GM10248 (cell line): ENCODE measurements at regions of chr11 and their contacts with region 1.

Region 1: GRCh38 chr11:9015677-9016076 is 11.9 kb upstream of the NRIP3 start:
- DNase-seq: peak; percentile 80
- CTCF ChIP-seq: peak; percentile 79

Region 2: DNA sequence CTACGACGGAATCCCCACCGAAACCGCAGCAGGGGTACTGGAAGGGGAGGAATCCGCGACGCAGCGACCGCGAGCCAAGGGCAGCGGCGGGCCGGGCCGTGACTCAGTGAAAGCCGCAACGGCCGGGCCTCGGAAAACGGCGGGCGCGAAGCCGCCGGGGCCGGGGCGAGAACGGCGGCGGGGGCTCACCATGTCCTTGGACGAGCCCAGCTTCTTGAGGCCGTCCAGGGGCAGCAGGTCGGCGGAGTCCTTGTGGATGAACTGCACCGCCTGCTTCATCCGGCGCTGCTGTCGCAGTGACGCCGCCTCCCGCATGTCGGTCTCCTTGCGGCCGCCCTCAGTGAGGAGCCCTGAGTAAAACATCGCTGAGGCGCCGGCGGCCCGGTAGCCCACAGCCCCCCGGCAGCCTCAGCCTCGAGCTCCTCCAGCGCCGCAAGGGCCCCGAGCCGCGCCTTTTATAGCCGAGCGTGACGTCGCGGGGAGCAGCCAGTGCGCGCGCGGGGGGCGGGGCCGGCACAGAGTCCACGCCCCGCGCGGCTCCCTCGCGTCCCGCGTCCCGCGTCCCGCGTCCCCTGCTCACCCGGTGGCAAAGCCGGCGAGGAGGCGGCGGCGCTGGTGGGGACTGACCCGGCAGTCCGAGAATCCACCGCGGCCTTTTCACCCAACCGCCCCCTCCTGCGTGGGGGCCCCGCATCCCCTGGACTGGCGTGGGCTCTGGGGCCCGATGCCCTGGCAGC is 11.9 kb before region 1 on chr11 and contains the start of gene NRIP3:
- CTCF ChIA-PET with region 1: interaction called, 62 read pairs
- POLR2A ChIA-PET with region 1: no interaction called
- DNase-seq: peak; percentile 77
- CTCF ChIP-seq: no peak

Region 3: GRCh38 chr11:9039194-9039593 is 23.5 kb after region 1 on chr11:
- CTCF ChIA-PET with region 1: interaction called, 137 read pairs
- POLR2A ChIA-PET with region 1: no interaction called
- DNase-seq: peak; percentile 39
- CTCF ChIP-seq: no peak

Region 4: GRCh38 chr11:9047964-9048523 is 32.4 kb after region 1 on chr11:
- CTCF ChIA-PET with region 1: interaction called, 21 read pairs
- POLR2A ChIA-PET with region 1: no interaction called
- DNase-seq: no peak
- CTCF ChIP-seq: no peak

Region 5: DNA sequence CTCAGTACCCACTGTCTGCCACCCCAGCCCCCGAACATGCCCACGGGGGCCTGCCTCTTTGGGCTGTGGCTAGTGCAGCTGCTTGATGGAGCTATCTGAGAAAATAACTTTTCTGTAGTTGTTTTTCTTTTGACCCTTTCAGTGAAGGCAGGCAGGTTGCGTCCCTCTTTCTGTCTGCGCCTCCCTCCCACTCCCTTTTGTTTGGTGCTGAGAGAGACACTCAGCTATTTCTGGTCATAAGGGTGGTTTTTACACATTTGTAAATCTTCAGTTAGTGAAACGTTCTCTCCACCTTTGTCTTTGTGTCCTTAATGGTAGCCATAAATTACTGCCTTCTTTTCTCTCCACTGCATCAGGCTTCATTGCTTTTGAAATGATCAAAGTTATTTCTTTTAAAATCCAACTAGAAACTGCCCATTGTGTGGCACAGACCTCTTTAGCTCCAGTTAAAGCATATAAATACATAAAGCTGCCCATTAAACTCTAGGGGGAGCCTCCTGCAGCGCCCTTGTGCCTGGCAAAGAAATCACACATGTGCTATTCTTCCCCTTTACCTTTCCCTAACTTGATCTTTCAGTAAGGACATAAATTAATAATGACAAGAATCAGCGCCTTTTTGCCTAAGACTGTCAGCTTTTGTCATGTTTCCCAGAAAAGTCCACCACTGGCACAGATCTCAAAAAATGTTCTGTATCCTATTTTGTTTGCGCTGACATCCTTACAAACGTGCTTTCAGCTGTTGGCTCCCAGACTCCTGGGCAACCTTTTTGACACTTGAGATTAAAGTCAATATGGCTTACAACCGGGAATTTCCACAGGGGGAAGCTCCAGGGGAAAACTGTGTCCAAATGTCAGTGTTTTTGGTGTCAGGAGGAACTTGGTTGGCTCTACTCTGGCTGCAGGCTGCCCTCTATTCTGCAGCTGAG is 77.4 kb after region 1 on chr11:
- CTCF ChIA-PET with region 1: interaction called, 39 read pairs
- POLR2A ChIA-PET with region 1: no interaction called
- DNase-seq: no peak
- CTCF ChIP-seq: peak; percentile 8

Region 6: DNA sequence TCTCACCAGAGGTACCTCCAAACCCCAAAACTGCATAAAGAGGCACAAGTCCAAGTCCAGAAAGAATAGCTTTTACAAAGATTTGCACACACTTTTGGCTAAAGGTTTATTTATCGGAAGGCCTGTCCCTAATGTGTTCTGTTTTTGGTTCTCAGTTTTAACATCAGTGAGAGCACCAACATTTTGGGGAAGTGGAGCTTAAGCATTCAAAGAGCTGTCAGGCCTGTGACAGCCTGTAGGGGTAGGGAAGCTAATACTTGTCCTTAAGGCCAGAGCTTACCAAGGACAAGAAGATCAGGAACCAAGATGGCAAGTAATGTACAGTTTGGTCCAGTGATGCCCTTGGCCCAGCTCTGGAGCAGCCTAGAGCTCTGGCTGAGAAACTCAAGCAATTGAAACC is 114.6 kb after region 1 on chr11:
- CTCF ChIA-PET with region 1: interaction called, 224 read pairs
- POLR2A ChIA-PET with region 1: no interaction called
- DNase-seq: no peak
- CTCF ChIP-seq: no peak

Region 7: DNA sequence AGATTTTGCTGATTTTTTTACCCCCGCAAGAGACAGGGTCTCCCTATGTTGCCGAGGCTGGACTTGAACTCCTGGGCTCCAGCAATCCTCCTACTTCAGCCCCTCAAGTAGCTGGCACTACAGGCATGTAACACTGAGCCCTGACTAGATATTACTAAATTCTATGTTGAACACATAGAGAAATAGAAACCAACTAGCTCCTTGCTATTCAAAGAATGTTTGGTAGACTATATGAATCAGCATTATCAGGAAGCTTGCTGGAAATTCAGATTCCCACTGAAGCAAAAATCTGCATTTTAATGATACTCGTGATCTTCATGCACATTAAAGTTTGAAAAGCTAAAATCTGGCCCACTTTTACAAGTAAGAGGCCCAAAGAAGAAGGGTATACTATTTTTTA is 286.8 kb after region 1 on chr11:
- CTCF ChIA-PET with region 1: no interaction called
- POLR2A ChIA-PET with region 1: no interaction called
- DNase-seq: no peak
- CTCF ChIP-seq: no peak